PC-9 (cell line): ENCODE measurements at regions of chr14 and their contacts with region 1.

Region 1: GRCh38 chr14:65412032-65412846 is at the start of gene FUT8:
- DNase-seq: peak; percentile 89 to 99
- H3K4me3 ChIP-seq: peak within 1 kb of the TSS; percentile 97
- H3K27ac ChIP-seq: peak within 1 kb of the TSS; percentile 90
- H3K4me1 ChIP-seq: peaks cover 40% of the 10 kb centered on the region
- H3K27me3 ChIP-seq: no peaks in the 10 kb centered on the region
- CTCF ChIP-seq: peak; percentile 63
- total RNA-seq, gene FUT8: 134 and 135 TPM in 2 replicates

Region 2: DNA sequence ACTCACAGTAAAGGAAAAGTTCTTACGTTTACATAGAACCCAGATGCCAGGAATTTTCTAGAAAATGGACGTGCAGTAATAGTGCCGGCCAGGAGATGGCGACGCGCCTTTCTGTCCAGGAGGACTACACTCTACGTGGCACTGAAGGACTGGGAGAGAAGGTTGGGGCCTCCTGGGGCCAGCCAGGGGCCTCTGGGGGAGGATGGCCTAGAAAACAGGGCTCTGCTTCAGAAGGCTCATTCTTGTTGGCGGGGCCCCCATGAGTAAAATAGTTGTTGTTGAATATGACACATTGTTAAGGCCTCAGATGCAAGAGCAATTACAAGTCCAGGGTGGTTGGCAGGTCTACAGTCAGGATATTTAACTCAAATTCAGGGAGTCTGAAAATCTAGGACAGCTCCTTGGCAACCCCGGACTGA is 189.8 kb before region 1 on chr14:
- CTCF ChIA-PET with region 1: no interaction called
- POLR2A ChIA-PET with region 1: no interaction called
- intact Hi-C with region 1: loop called (anchors 2 kb)
- DNase-seq: peak; percentile 33 to 40
- H3K4me3 ChIP-seq: no peak overlapping the region
- H3K27ac ChIP-seq: no peak overlapping the region
- H3K4me1 ChIP-seq: peaks cover 30% of the 10 kb centered on the region
- H3K27me3 ChIP-seq: no peaks in the 10 kb centered on the region
- CTCF ChIP-seq: peak; percentile 93

Region 3: GRCh38 chr14:65255536-65256461 is 156.4 kb before region 1 on chr14:
- CTCF ChIA-PET with region 1: no interaction called
- POLR2A ChIA-PET with region 1: interaction called, 10 read pairs
- intact Hi-C with region 1: loop called (anchors 1 kb)
- DNase-seq: peak; percentile 92
- H3K4me3 ChIP-seq: peak overlapping the region; percentile 47; the same call in 1 of the 2 replicates
- H3K27ac ChIP-seq: peak overlapping the region; percentile 98
- H3K4me1 ChIP-seq: peaks cover 86% of the 10 kb centered on the region
- H3K27me3 ChIP-seq: no peaks in the 10 kb centered on the region
- CTCF ChIP-seq: peak; percentile 38; the same call in 1 of the 2 replicates

Region 4: GRCh38 chr14:65321370-65321875 is 90.8 kb before region 1 on chr14:
- CTCF ChIA-PET with region 1: interaction called, 11 read pairs
- POLR2A ChIA-PET with region 1: interaction called, 27 read pairs
- intact Hi-C with region 1: no loop called
- DNase-seq: peak; percentile 62 to 98
- H3K4me3 ChIP-seq: no peak overlapping the region
- H3K27ac ChIP-seq: peak overlapping the region; percentile 99
- H3K4me1 ChIP-seq: peaks cover 66% of the 10 kb centered on the region
- H3K27me3 ChIP-seq: no peaks in the 10 kb centered on the region
- CTCF ChIP-seq: no peak

Region 5: GRCh38 chr14:65792208-65792905 is 380.1 kb after region 1 on chr14:
- CTCF ChIA-PET with region 1: no interaction called
- POLR2A ChIA-PET with region 1: no interaction called
- intact Hi-C with region 1: no loop called
- DNase-seq: peak; percentile 61 to 78
- H3K4me3 ChIP-seq: no peak overlapping the region
- H3K27ac ChIP-seq: peak overlapping the region; percentile 57
- H3K4me1 ChIP-seq: peaks cover 14% of the 10 kb centered on the region
- H3K27me3 ChIP-seq: no peaks in the 10 kb centered on the region
- CTCF ChIP-seq: no peak

Region 6: DNA sequence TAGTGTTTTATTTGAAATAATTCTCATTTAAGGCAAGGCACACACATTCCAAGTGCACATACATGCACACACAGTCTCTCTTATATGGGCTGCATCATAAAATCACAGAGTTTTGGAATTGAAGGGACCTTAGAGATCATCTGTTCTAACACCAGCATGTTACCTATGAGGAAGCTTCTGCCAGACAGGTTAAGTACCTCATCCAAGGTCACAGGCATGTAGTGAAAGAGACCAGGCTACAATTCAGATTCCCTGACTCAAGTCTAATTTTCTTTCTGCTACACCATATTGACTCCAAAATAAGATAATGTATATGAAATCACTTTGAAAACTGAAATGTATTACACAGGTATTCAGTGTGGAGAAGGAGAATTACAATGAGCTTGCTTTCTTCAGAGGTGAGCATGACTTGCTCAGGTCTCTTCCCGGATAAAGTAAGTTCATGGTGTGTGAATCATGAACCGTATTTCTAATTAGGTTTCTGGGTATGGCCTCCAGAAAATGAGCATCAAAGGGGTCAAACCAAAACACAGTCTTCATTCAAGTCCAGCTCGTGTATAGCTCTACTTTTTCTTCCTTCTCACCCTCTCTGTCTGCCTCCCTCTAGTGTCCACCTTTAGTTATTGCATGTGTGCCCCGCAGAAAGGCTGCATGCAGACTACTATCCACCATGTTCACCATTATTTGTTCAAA is 412.2 kb after region 1 on chr14:
- CTCF ChIA-PET with region 1: interaction called, 59 read pairs
- POLR2A ChIA-PET with region 1: no interaction called
- intact Hi-C with region 1: loop called (anchors 1 kb)
- DNase-seq: peak; percentile 46 to 48
- H3K4me3 ChIP-seq: no peak overlapping the region
- H3K27ac ChIP-seq: no peak overlapping the region
- H3K4me1 ChIP-seq: no peaks in the 10 kb centered on the region
- H3K27me3 ChIP-seq: no peaks in the 10 kb centered on the region
- CTCF ChIP-seq: peak; percentile 92

Region 7: DNA sequence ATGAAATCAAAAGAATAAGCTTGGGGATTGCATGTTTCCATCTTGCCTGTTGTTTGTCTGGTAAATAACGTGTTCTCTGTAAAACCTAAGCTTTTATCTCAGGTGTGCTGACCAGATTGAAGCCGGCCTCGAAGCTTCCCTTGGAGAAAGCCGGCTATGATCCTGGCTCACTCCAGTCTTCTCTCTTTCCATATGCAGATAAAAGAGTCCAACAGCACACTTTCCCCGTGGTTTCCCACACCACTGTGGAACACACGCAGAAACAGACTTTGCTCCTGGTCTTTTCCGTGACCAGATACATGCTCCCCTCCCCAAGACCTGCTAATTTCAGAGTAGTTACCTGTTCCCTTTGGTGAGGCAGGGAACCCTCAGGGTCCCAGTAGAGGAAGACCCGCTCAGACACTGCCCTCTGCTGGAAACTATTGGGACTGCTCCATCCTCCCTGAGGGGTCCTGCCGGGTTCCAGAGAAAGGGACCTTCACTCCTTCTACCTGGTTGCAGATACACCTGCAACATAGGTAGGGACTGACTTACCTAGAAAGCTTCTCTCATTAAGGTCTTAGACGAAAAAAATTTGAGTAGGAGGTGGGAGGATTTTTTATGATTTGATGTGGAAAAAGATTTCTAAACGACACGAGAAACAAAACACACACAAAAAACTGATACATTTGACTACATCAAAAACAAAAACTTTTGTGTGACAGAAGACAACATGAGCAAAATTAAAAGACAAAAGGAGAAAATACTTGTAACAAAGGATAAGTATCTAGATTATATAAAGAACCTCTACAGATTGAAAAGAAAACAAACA is 658.5 kb after region 1 on chr14:
- CTCF ChIA-PET with region 1: interaction called, 5 read pairs
- POLR2A ChIA-PET with region 1: no interaction called
- intact Hi-C with region 1: loop called (anchors 2 kb)
- DNase-seq: peak in 1 of 2 experiments; percentile 63
- H3K4me3 ChIP-seq: no peak overlapping the region
- H3K27ac ChIP-seq: no peak overlapping the region
- H3K4me1 ChIP-seq: no peaks in the 10 kb centered on the region; the same call in 1 of the 2 replicates
- H3K27me3 ChIP-seq: no peaks in the 10 kb centered on the region
- CTCF ChIP-seq: peak; percentile 98